PC-3 (cell line): ENCODE measurements at regions of chr12 and their contacts with region 1.

Region 1: DNA sequence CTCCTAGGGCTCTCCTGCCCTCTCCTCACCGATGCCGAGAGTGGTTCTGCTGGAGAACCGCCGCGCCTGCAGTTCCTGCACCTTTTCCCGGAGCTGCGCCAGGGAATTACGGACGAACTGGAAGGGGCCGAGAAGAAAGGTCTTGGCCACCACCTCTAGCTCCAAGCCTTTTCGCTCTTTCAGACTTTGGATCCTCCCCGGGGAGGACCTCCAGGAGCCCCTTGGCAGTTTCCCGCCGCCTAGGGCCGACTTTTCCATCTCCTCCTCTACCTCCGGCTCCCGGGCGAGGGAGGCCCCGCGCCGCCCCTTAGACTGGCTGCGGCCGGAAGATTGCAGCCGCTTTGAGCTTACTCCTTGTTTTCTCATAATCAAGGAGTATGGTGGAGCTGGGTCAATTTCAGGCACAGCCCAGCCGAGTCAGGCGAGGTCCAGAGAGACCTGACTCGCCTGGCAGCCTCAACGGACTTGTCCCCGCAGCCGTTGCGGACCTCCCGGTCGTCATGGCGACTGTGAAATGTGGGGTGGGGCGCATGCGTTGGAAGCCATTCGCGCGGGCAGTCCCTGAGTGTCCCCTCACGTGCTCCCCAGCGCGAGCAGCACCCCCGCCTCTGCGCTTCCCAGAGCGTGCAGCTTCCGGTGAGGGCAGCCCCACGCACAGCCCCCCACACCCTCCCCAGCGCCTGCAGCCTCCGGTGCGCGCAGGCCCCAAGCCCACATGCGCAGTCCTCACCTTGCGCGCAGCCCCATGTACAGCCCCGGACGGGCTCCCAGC is at the start of gene DPY19L2:
- DNase-seq: peak; percentile 28
- ATAC-seq: peak; percentile 83
- H3K4me3 ChIP-seq: peak within 1 kb of the TSS; percentile 67
- H3K27ac ChIP-seq: no peak within 1 kb of the TSS
- H3K4me1 ChIP-seq: no peaks in the 10 kb centered on the region
- H3K27me3 ChIP-seq: peaks cover 29% of the 10 kb centered on the region
- CTCF ChIP-seq: no peak
- total RNA-seq, gene DPY19L2: 0.33 and 0.98 TPM in 2 replicates

Region 2: DNA sequence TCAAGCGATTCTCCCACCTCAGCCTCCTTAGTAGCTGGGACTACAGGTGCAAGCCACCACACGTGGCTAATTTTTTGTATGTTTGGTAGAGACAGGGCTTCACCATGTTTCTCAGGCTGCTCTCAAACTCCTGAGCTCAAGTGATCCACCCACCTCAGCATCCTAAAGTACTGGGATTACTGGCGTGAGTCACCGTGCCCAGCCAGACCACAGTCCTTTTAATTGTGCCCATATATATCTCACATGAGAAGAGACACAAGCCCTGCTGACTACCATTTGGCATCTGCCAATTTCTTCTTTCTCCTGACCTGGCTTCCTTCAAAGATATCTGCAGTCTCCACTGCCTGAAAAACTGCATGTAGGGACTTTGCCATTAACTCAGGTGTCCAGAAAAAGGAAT is 142.4 kb before region 1 on chr12:
- CTCF ChIA-PET with region 1: no interaction called
- POLR2A ChIA-PET with region 1: no interaction called
- intact Hi-C with region 1: no loop called
- DNase-seq: no peak
- ATAC-seq: no peak
- H3K4me3 ChIP-seq: no peak overlapping the region
- H3K27ac ChIP-seq: no peak overlapping the region
- H3K4me1 ChIP-seq: no peaks in the 10 kb centered on the region
- H3K27me3 ChIP-seq: peaks cover 5% of the 10 kb centered on the region; the same call in 1 of the 2 replicates
- CTCF ChIP-seq: no peak

Region 3: GRCh38 chr12:63766498-63766897 is 98.3 kb after region 1 on chr12:
- CTCF ChIA-PET with region 1: no interaction called
- POLR2A ChIA-PET with region 1: no interaction called
- intact Hi-C with region 1: loop called (anchors 1 kb)
- DNase-seq: peak; percentile 34
- ATAC-seq: no peak
- H3K4me3 ChIP-seq: no peak overlapping the region
- H3K27ac ChIP-seq: no peak overlapping the region
- H3K4me1 ChIP-seq: no peaks in the 10 kb centered on the region
- H3K27me3 ChIP-seq: peaks cover 34% of the 10 kb centered on the region
- CTCF ChIP-seq: peak; percentile 56

Region 4: DNA sequence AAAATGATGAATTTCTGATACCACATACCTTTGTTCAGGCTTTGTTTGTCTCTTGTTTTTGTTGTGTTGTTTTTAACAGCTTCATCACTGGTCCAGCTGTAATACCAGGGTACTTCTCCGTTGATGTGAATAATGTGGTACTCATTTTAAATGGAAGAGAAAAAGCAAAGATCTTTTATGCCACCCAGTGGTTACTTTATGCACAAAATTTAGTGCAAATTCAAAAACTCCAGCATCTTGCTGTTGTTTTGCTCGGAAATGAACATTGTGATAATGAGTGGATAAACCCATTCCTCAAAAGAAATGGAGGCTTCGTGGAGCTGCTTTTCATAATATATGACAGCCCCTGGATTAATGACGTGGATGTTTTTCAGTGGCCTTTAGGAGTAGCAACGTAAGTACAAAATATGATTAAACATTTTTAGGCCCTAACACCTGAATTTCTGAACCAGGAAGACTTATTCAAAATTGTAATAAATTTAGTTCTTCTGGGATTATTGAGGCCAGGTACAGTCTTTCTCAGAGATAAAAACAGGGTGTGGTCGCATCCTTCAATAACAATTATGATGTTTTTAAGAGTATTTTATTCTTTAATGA is 133.9 kb after region 1 on chr12:
- CTCF ChIA-PET with region 1: no interaction called
- POLR2A ChIA-PET with region 1: no interaction called
- intact Hi-C with region 1: loop called (anchors 1 kb)
- DNase-seq: peak; percentile 62
- ATAC-seq: no peak
- H3K4me3 ChIP-seq: no peak overlapping the region
- H3K27ac ChIP-seq: no peak overlapping the region
- H3K4me1 ChIP-seq: peaks cover 24% of the 10 kb centered on the region
- H3K27me3 ChIP-seq: no peaks in the 10 kb centered on the region
- CTCF ChIP-seq: peak; percentile 82